Activated T-helper 2 cell treated with anti-CD3 and anti-CD28 coated beads, Interferon-gamma antibody, Interleukin-2, Interleukin-4, amounts not matched to agents 10 μg/mL and 5 μg/mL and 100 μg/mL, durations not matched to agents 14 hours and 24 hours and 36 hours (primary cell): ENCODE measurements at regions of chr3 and their contacts with region 1.

Region 1: GRCh38 chr3:141383555-141384129 is 15.3 kb downstream of the ZBTB38 start:
- DNase-seq: no peak
- H3K4me3 Mint-ChIP-seq: no peak overlapping the region
- H3K27ac Mint-ChIP-seq: no peak overlapping the region
- H3K4me1 Mint-ChIP-seq: peaks cover 9% of the 10 kb centered on the region
- H3K27me3 Mint-ChIP-seq: peaks cover 6% of the 10 kb centered on the region

Region 2: GRCh38 chr3:141370065-141370533 is 13.5 kb before region 1 on chr3:
- intact Hi-C with region 1: loop called (anchors 2 kb)
- DNase-seq: peak; percentile 58
- H3K4me3 Mint-ChIP-seq: no peak overlapping the region
- H3K27ac Mint-ChIP-seq: peak overlapping the region; percentile 40
- H3K4me1 Mint-ChIP-seq: peaks cover 27% of the 10 kb centered on the region
- H3K27me3 Mint-ChIP-seq: no peaks in the 10 kb centered on the region

Region 3: GRCh38 chr3:141913150-141913811 is 529.6 kb after region 1 on chr3:
- intact Hi-C with region 1: no loop called
- DNase-seq: peak; percentile 30
- H3K4me3 Mint-ChIP-seq: no peak overlapping the region
- H3K27ac Mint-ChIP-seq: no peak overlapping the region
- H3K4me1 Mint-ChIP-seq: peaks cover 8% of the 10 kb centered on the region
- H3K27me3 Mint-ChIP-seq: no peaks in the 10 kb centered on the region